AG04450 (cell line): ENCODE measurements at regions of chr1 and their contacts with region 1.

Region 1: DNA sequence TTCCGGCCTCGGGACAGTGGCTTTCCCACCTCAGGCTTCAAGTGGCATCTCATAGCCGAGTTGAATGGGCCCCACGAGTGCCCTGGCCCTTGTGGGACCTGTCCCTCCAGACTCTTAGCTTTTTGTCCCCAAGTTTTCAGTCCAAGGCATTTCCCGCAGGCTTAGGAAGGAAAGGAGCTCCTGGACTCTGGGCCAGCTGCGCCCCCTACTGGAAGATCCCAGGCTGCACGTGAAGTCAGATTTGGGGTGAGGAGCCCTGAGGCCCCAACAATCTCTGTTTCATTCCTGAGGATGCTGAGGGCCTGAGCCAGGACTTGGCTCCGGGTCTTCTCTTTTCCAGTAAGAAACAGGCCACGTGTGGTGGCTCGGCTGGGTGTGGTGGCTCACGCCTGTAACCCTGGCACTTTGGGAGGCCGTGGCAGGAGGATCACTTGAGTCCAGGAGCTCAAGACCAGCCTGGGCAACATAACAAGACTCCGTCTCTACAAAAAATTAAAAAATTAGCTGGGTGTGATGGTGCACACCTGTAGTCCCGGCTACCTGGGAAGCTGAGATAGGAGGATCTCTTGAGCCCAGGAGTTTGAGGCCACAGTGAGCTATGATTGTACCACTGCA is 67.4 kb downstream of the ARHGEF10L start:
- DNase-seq: peak; percentile 33
- H3K4me3 ChIP-seq: no peak overlapping the region
- H3K27ac ChIP-seq: no peak overlapping the region
- H3K27me3 ChIP-seq: no peaks in the 10 kb centered on the region
- CTCF ChIP-seq: peak; percentile 96

Region 2: DNA sequence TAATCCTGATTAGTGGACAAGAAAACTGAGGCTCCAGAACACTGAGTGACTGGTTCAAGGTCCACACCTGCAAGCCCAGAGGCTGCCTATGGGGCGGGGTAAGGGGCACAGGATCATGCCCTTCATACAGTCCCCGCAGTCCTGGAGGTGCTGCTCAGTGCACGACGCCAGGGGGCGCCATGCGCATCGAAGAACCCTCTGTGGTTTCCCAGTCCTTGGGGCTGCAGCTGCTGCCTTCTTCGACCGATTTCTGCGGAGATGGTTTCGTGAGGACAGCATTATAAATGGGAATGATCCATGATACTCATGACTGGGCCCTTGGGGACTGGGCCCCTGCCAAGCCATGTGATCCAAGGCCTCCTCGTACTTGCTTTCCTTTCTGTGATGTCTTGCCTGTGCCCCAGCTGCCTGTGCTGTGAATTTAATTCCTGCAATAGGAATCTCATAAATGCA is 104.6 kb before region 1 on chr1:
- CTCF ChIA-PET with region 1: interaction called, 299 read pairs
- POLR2A ChIA-PET with region 1: interaction called, 4 read pairs
- DNase-seq: peak; percentile 65
- H3K4me3 ChIP-seq: no peak overlapping the region
- H3K27ac ChIP-seq: no peak overlapping the region
- H3K27me3 ChIP-seq: peaks cover 4% of the 10 kb centered on the region
- CTCF ChIP-seq: peak; percentile 96

Region 3: GRCh38 chr1:17515922-17516618 is 90.9 kb before region 1 on chr1:
- CTCF ChIA-PET with region 1: interaction called, 22 read pairs
- POLR2A ChIA-PET with region 1: no interaction called
- DNase-seq: no peak
- H3K4me3 ChIP-seq: no peak overlapping the region
- H3K27ac ChIP-seq: no peak overlapping the region
- H3K27me3 ChIP-seq: peaks cover 37% of the 10 kb centered on the region
- CTCF ChIP-seq: no peak

Region 4: GRCh38 chr1:17553969-17554700 is 52.8 kb before region 1 on chr1:
- CTCF ChIA-PET with region 1: interaction called, 13 read pairs
- POLR2A ChIA-PET with region 1: no interaction called
- DNase-seq: peak; percentile 49
- H3K4me3 ChIP-seq: no peak overlapping the region
- H3K27ac ChIP-seq: peak overlapping the region; percentile 68
- H3K27me3 ChIP-seq: no peaks in the 10 kb centered on the region
- CTCF ChIP-seq: no peak

Region 5: GRCh38 chr1:17587989-17588685 is 18.8 kb before region 1 on chr1:
- CTCF ChIA-PET with region 1: interaction called, 47 read pairs
- POLR2A ChIA-PET with region 1: no interaction called
- DNase-seq: no peak
- H3K4me3 ChIP-seq: 0 out of 2 replicates have a peak overlapping the region, but pooled peaks have one; percentile 13
- H3K27ac ChIP-seq: peak overlapping the region; percentile 82
- H3K27me3 ChIP-seq: no peaks in the 10 kb centered on the region
- CTCF ChIP-seq: no peak

Region 6: DNA sequence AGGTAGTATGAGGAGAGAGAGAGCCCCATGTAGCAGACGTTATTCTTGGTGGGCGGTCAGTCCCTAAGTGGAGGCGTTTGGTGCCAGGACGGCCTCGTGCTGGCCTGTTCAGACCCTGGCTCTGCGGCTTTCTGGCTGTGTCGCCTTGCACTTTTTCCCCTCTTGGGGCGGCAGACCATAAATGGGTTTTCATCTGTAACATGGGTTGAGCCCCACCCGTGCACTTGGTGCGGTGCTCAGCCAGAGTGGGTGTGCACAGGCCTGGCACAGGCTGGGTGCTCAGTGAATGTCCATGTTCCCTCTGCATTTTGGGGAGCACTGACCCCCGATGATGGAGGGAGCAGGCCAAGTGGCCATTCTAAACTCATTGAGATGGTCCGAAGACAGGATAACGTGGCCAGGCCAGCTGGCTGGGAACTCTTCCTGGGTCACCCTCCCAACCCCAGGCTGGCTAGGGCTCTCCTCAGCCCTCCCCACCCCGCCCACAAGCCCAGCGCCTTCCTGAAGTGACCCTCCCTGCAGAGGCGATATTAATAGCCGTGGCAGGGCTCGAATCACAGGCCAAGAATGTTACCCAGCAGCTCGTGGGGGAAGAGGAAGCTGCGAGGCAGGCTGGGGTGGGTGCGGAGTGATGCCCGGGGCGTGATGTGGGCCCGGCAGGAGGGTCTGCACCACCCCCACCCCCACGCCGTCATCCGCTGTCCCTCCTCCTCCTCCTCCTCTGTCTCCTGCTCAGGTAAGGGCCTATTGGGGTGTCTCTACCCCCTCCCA is 11.0 kb after region 1 on chr1:
- CTCF ChIA-PET with region 1: interaction called, 49 read pairs
- POLR2A ChIA-PET with region 1: no interaction called
- DNase-seq: no peak
- H3K4me3 ChIP-seq: peak overlapping the region; percentile 55
- H3K27ac ChIP-seq: peak overlapping the region; percentile 52
- H3K27me3 ChIP-seq: no peaks in the 10 kb centered on the region
- CTCF ChIP-seq: no peak

Region 7: GRCh38 chr1:17719874-17720273 is 112.9 kb after region 1 on chr1:
- CTCF ChIA-PET with region 1: no interaction called
- POLR2A ChIA-PET with region 1: no interaction called
- DNase-seq: no peak
- H3K4me3 ChIP-seq: no peak overlapping the region
- H3K27ac ChIP-seq: no peak overlapping the region
- H3K27me3 ChIP-seq: peaks cover 10% of the 10 kb centered on the region
- CTCF ChIP-seq: no peak

Region 8: GRCh38 chr1:17957588-17958260 is 350.8 kb after region 1 on chr1:
- CTCF ChIA-PET with region 1: no interaction called
- POLR2A ChIA-PET with region 1: no interaction called
- DNase-seq: no peak
- H3K4me3 ChIP-seq: no peak overlapping the region
- H3K27ac ChIP-seq: no peak overlapping the region
- H3K27me3 ChIP-seq: peaks cover 4% of the 10 kb centered on the region
- CTCF ChIP-seq: no peak